Right cardiac atrium (tissue), 5 donors: ENCODE measurements at regions of chr12 and their contacts with region 1.

Region 1: GRCh38 chr12:39237004-39237403 is 205.9 kb downstream of the KIF21A start:
- DNase-seq: no peak
- ATAC-seq: no peak
- H3K4me3 ChIP-seq: no peak overlapping the region
- H3K27ac ChIP-seq: no peak overlapping the region
- H3K4me1 ChIP-seq: no peaks in the 10 kb centered on the region
- H3K27me3 ChIP-seq: no peaks in the 10 kb centered on the region

Region 2: DNA sequence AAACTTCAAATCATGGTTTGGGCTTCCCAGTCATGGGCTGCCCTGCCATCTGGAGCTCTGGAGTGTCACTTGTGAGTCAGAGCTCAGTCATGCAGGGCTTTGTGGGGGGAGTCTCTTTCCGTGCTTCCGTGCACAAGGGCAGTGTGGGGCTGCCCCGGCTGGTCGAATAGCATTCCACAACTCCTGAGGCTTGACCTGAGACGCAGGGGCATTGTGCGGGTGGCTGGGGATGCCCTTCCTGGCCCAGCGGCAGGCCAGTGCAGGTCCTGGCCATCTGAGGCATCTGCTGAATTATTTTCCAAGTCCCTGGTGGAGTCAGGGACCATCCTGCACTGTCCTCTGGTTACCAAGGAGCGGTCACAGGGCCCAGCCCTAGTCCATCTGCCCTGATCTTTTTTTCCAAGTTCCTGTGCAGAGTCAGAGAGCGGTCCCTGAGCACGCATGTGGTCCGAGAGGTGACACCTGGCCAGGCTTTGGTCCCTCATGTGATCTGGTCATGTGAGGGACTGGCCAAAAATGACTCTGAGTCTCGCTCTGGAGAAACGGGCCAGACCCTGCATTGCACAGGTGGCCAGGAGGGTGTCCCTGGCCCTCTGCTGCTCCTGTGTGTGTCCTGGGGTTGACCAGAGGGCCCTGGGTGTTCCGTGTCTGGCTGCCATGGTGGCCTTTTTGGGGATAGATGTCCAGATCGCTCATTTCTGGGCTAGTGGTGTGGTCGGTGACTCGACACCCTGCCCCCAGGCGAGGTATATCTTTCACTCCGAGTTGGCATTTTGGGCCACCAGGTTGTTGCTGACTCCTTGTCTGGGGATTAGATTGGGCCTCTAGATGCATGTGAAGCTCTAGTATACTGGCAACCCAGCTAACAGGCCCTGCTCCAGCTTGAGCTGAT is 1087.4 kb before region 1 on chr12:
- intact Hi-C with region 1: loop called in 1 of 4 experiments (anchors 10 kb)
- DNase-seq: peak in 1 of 3 donors; percentile 29
- ATAC-seq: no peak
- H3K4me3 ChIP-seq: no peak overlapping the region
- H3K27ac ChIP-seq: no peak overlapping the region
- H3K4me1 ChIP-seq: no peaks in the 10 kb centered on the region
- H3K27me3 ChIP-seq: no peaks in the 10 kb centered on the region

Region 3: DNA sequence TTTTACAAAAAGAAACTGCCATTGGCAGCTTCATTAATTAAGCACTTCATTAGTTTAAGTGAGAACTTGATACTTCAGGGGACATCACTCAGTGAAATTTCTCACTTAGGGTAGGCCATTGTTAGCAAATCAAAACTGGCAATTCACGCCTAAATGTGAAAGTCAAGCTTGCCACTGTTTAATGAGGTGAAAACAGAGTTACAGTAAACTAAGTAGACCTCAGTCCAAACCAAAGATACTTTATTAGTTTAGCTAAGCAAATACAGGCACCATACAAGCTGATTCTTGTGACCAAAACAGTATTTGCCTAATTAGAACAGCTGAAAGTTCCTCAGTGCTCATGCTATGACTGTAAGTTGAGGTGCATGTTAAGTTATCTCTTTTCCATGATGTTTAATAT is 155.1 kb before region 1 on chr12:
- intact Hi-C with region 1: no loop called
- DNase-seq: no peak
- ATAC-seq: no peak
- H3K4me3 ChIP-seq: no peak overlapping the region
- H3K27ac ChIP-seq: no peak overlapping the region
- H3K4me1 ChIP-seq: no peaks in the 10 kb centered on the region
- H3K27me3 ChIP-seq: no peaks in the 10 kb centered on the region